Right lobe of liver (tissue), 6 donors: ENCODE measurements at regions of chr3 and their contacts with region 1.

Region 1: GRCh38 chr3:196684548-196685407 is 27.3 kb downstream of the CEP19 start:
- DNase-seq: peak in 2 of 3 donors; percentile 34 to 63
- ATAC-seq: peak; percentile 86 to 91 (median 88)
- H3K4me3 ChIP-seq: no peak overlapping the region
- H3K27ac ChIP-seq: no peak overlapping the region
- H3K4me1 ChIP-seq: peaks cover 0 to 7% (median 0%) of the 10 kb centered on the region in 4 donors
- H3K27me3 ChIP-seq: no peaks in the 10 kb centered on the region
- CTCF ChIP-seq: peak; percentile 89 to 90 (median 89)
- POLR2A ChIP-seq: no peak

Region 2: GRCh38 chr3:196611761-196612483 is 72.9 kb before region 1 on chr3:
- intact Hi-C with region 1: loop called (anchors 5 kb)
- DNase-seq: no peak
- ATAC-seq: peak; percentile 27 to 43 (median 34)
- H3K4me3 ChIP-seq: no peak overlapping the region
- H3K27ac ChIP-seq: peak overlapping the region in 1 of 3 donors; percentile 24
- H3K4me1 ChIP-seq: no peaks in the 10 kb centered on the region
- H3K27me3 ChIP-seq: no peaks in the 10 kb centered on the region
- CTCF ChIP-seq: no peak
- POLR2A ChIP-seq: no peak

Region 3: DNA sequence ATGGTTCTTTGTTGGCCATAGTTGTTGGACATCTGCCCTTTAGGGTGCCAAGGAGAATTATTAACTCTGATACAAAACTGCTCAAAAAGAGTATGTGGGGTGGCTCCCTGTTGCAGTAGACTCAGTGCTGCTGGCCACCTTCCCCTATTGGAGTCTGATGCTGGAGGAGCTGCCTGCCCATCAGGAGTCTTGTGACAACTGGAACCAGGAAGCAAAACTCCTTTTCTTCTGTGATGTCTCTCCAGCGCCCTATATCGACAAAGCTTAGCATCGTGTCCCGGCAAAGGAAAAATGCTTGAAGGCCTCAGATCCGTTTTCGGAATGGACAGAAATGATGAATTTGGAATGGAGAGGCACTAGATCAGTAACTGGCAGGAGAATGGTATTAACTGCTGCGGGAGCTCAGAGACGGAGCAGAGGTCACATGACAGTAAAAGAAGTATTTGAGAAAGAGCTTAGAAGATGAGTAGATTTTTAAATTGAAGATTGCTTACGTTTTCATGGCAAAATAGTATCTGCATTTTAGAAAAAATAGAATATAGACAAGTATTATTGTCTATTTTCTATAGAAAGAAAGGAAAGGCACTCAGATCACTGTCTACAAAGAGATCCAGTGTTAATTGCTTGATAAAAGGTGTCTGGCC is 78.5 kb after region 1 on chr3:
- intact Hi-C with region 1: no loop called
- DNase-seq: no peak
- ATAC-seq: peak in 1 of 4 donors; percentile 34
- H3K4me3 ChIP-seq: no peak overlapping the region
- H3K27ac ChIP-seq: no peak overlapping the region
- H3K4me1 ChIP-seq: no peaks in the 10 kb centered on the region
- H3K27me3 ChIP-seq: no peaks in the 10 kb centered on the region
- CTCF ChIP-seq: no peak
- POLR2A ChIP-seq: no peak